ENCODE measurements at regions of chr4 and their contacts with region 1.

Region 1: DNA sequence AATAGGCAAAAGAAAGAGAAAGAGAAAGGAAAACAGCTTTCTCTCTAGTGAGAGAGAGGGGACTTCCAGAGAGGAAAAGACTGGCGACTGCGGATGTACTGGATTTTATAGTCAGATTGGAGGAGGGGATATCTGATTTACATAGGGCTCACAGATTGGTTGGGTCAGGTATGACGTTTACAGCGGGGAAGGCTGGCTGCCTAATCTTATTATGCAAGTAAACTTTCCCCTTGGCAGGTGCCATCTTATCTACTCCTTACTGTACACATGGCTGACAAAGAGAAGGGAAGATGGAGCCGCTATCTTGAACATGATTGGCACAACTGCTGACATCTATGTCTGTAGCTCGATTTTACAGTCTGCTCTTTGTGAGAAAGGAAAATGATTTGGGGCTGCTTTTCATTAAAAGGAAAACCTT is 25.4 kb downstream of the RBPJ start:
- DNase-seq: no peak
- H3K4me3 Mint-ChIP-seq: no peak overlapping the region
- H3K27ac Mint-ChIP-seq: no peak overlapping the region
- H3K4me1 Mint-ChIP-seq: peaks cover 58% of the 10 kb centered on the region
- H3K27me3 Mint-ChIP-seq: no peaks in the 10 kb centered on the region

Region 2: GRCh38 chr4:26384380-26385057 is 38.3 kb after region 1 on chr4:
- intact Hi-C with region 1: loop called (anchors 5 kb)
- DNase-seq: no peak
- H3K4me3 Mint-ChIP-seq: no peak overlapping the region
- H3K27ac Mint-ChIP-seq: peak overlapping the region; percentile 29
- H3K4me1 Mint-ChIP-seq: peaks cover 24% of the 10 kb centered on the region
- H3K27me3 Mint-ChIP-seq: no peaks in the 10 kb centered on the region

Region 3: DNA sequence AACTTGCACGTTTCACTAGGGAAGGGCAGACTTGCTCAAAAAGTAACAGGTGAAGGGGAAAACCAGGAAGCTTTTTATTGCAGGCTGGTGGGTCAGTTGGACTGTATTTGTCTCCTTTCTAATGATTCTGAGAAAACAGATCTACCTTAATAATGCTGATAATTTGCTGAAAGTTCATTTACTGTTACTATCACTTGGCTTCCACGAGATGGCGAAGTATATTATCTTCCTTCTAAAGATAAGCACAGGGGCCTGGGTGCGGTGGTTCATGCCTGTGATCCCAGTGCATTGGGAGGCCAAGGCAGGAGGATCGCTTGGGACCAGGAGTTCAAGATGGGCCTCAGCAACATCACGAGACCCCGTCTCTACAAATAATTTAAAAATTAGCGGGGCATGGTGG is 127.7 kb after region 1 on chr4:
- intact Hi-C with region 1: no loop called
- DNase-seq: no peak
- H3K4me3 Mint-ChIP-seq: no peak overlapping the region
- H3K27ac Mint-ChIP-seq: no peak overlapping the region
- H3K4me1 Mint-ChIP-seq: no peaks in the 10 kb centered on the region
- H3K27me3 Mint-ChIP-seq: no peaks in the 10 kb centered on the region